Gastrocnemius medialis (tissue), 4 donors: ENCODE measurements at regions of chr1 and their contacts with region 1.

Region 1: DNA sequence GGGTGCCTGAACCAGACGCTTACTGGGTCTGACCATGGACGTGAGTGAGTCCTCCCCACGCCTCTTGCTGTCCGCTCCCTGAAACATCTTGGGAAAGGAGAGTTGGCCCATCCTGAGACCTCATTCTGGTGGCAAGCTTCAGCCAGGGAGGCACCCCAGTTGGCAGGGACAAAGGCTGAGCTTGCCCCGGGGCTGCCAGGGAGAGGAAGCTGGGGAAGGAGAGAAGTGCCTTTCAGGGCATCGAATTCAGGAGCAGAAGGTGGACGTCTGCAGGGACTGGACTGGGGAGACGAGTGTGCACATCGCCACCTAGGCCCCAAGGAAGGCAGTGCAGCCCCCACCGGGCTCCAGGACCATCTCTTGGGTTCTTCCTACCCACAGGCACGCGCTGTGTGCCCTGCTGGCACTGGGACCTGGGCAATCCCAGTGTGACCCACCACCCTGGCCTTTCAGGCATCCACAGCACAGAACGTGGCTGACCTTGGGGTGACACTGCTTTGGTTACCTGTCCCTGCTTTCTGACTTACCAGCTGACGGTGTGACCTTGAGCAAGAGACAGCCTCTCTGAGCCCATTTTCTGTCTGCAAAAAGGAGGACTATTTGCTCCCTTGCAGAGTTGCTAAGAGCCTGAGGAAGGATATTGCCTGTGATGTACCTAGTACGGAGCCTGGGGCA is 133.0 kb upstream of the WNT4 start:
- DNase-seq: peak in 1 of 2 donors; percentile 16
- ATAC-seq: peak in 1 of 2 donors; percentile 42
- H3K4me3 ChIP-seq: no peak overlapping the region
- H3K27ac ChIP-seq: no peak overlapping the region
- H3K4me1 ChIP-seq: no peaks in the 10 kb centered on the region
- H3K27me3 ChIP-seq: peaks cover 0 to 5% (median 0%) of the 10 kb centered on the region in 3 donors
- CTCF ChIP-seq: peak; percentile 20 to 75 (median 58)
- POLR2A ChIP-seq: no peak

Region 2: GRCh38 chr1:22105611-22106207 is 170.1 kb before region 1 on chr1:
- in situ Hi-C with region 1: loop called in 1 of 4 experiments (anchors 10 kb)
- intact Hi-C with region 1: no loop called
- DNase-seq: no peak
- ATAC-seq: peak; percentile 55 to 63
- H3K4me3 ChIP-seq: no peak overlapping the region
- H3K27ac ChIP-seq: no peak overlapping the region
- H3K4me1 ChIP-seq: peaks cover 4 to 8% of the 10 kb centered on the region in 2 donors
- H3K27me3 ChIP-seq: no peaks in the 10 kb centered on the region
- CTCF ChIP-seq: peak; percentile 73 to 82 (median 79)
- POLR2A ChIP-seq: no peak

Region 3: GRCh38 chr1:22131875-22132486 is 143.9 kb before region 1 on chr1:
- in situ Hi-C with region 1: no loop called
- intact Hi-C with region 1: loop called (anchors 10 kb)
- DNase-seq: peak in 1 of 2 donors; percentile 25
- ATAC-seq: peak in 1 of 2 donors; percentile 37
- H3K4me3 ChIP-seq: no peak overlapping the region
- H3K27ac ChIP-seq: peak overlapping the region in 2 of 4 donors; percentile 69 to 79
- H3K4me1 ChIP-seq: peaks cover 20 to 25% of the 10 kb centered on the region in 2 donors
- H3K27me3 ChIP-seq: no peaks in the 10 kb centered on the region
- CTCF ChIP-seq: peak; percentile 43 to 79 (median 69)
- POLR2A ChIP-seq: no peak

Region 4: GRCh38 chr1:22808676-22809483 is 533.0 kb after region 1 on chr1:
- in situ Hi-C with region 1: no loop called
- intact Hi-C with region 1: no loop called
- DNase-seq: no peak
- ATAC-seq: peak in 1 of 2 donors; percentile 56
- H3K4me3 ChIP-seq: no peak overlapping the region
- H3K27ac ChIP-seq: peak overlapping the region in 1 of 4 donors; percentile 20
- H3K4me1 ChIP-seq: no peaks in the 10 kb centered on the region
- H3K27me3 ChIP-seq: no peaks in the 10 kb centered on the region
- CTCF ChIP-seq: no peak
- POLR2A ChIP-seq: no peak